Right cardiac atrium (tissue), 5 donors: ENCODE measurements at regions of chr19 and their contacts with region 1.

Region 1: DNA sequence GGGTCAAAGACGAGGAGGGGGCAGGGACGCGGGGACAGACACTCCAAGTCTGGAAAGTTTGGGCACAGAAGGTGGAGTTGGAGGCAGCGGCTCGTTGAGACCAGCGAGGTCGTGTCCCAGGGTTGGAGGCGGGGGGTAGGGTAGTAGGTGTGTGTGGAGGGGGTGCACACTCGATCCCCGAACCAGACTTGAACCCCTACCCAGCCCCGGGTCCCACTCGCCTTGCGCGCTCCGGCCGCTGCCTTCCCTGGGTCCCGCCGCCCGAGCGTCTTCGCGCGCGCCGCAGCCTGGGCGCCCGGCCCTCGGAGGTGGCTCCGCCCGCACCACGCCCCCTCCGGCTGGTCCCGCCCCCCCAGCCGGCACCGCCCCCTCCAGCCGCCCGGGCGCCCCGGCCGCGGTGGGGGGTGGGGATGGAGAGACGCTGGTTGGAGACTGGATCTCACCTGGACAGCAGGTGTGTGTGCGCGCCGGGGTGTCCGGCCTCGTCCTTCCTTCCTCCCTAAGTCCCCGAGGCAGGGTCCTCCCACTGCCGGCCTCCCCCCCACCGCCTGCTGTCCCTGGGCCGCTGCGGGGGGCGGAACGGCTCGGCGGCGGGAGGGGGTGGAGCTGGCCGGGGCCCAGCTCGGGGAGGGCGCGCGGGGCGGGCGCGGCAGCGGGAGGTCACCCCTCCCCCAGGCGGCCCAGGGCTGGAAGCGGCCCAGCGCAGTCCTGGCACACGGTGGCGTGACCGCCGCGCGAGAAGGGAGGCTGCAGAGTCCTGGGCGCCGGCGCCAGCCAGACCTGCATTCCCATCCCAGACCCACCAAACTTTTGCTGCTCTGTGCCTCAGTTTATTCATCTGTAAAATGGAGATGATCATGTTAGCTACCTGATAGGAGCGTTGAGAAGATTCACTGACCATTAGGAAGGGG is at the start of gene KANK2:
- DNase-seq: peak; percentile 88 to 96 (median 95)
- ATAC-seq: peak; percentile 85 to 87
- H3K4me3 ChIP-seq: peak within 1 kb of the TSS; percentile 90
- H3K27ac ChIP-seq: peak within 1 kb of the TSS; percentile 97
- H3K4me1 ChIP-seq: peaks cover 7% of the 10 kb centered on the region
- H3K27me3 ChIP-seq: no peaks in the 10 kb centered on the region
- total RNA-seq, gene KANK2: 244 to 324 (median 295) TPM

Region 2: DNA sequence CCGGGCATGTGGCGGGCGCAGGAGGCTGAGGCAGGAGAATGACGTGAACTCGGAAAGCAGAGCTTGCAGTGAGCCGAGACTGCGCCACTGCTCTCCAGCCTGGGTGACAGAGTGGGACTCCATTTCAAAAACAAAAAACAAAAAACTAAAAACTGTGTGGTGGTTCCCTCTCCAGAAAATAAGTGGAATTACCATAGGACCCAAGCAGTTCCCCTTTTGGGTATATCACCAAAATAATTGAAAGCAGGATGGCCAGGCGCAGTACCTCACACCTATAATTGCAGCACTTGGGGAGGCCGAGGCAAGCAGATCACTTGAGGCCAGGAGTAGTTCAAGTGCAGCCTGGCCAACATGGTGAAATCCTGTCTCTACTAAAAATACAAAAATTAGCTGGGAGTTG is 124.0 kb before region 1 on chr19:
- intact Hi-C with region 1: no loop called
- DNase-seq: no peak
- ATAC-seq: no peak
- H3K4me3 ChIP-seq: no peak overlapping the region
- H3K27ac ChIP-seq: no peak overlapping the region
- H3K4me1 ChIP-seq: no peaks in the 10 kb centered on the region
- H3K27me3 ChIP-seq: no peaks in the 10 kb centered on the region

Region 3: GRCh38 chr19:11137542-11138384 is 59.8 kb before region 1 on chr19:
- intact Hi-C with region 1: loop called in 2 of 4 experiments (anchors 5 kb)
- DNase-seq: peak; percentile 88 to 93 (median 93)
- ATAC-seq: peak; percentile 66 to 67
- H3K4me3 ChIP-seq: peak overlapping the region; percentile 12
- H3K27ac ChIP-seq: peak overlapping the region; percentile 94
- H3K4me1 ChIP-seq: peaks cover 12% of the 10 kb centered on the region
- H3K27me3 ChIP-seq: no peaks in the 10 kb centered on the region

Region 4: DNA sequence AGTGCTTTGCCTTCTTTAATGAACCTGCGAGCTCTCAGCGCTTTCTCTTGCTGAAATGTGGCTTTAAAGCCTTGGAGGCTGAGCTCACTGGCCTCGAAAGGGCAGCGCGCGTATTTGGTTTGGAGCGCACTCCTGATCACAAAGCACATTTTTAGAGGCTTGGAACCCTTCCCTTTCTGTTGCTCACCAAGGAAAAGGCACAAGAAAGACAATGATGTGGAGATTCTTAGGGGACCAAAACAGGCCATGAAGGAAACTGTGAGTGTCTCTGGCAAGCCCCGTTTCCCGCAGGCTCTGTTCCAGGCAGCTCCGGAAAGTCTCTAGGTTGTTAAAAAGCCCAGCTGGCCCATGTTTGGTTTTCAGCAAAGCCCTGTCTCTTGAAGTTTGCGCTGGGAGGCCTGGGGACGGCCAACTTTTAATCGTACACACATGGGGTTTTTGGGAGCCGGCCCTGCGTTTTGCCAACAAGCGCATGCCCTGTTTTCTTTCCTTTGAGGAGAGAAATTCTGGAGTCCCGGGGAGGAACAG is 32.6 kb before region 1 on chr19:
- intact Hi-C with region 1: loop called in 1 of 4 experiments (anchors 5 kb)
- DNase-seq: peak; percentile 90 to 96 (median 94)
- ATAC-seq: peak; percentile 80 to 84
- H3K4me3 ChIP-seq: no peak overlapping the region
- H3K27ac ChIP-seq: peak overlapping the region; percentile 79
- H3K4me1 ChIP-seq: peaks cover 12% of the 10 kb centered on the region
- H3K27me3 ChIP-seq: no peaks in the 10 kb centered on the region